Lower leg skin (tissue), 4 donors: ENCODE measurements at regions of chr7 and their contacts with region 1.

Region 1: GRCh38 chr7:1654738-1655475 is 15.2 kb upstream of the ELFN1 start:
- DNase-seq: no peak
- H3K4me3 ChIP-seq: no peak overlapping the region
- CTCF ChIP-seq: no peak
- POLR2A ChIP-seq: no peak

Region 2: DNA sequence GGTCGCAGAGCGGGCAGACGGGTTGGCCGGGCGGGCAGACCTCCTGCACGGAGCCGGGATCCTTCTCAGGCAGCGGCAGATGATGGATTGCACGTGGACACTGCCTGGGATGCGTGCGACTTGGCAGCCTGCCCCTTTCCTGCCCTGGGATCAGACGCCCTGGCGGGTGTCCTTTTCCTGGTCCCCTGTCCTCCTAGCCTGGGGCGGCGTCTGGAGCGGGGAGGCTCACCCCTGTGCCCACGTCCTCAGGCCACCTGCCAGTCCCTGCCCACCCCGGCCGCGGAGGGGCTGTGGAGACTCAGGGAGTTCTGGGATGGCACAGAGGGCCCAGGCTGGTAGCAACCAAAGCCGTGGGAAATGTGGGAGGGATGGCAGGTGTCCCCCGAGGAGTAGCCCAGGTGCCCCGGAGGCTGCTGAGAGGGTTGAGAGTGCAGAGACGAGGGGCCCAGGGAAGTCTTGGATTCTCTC is 67.7 kb before region 1 on chr7:
- intact Hi-C with region 1: loop called (anchors 2 kb)
- DNase-seq: no peak
- H3K4me3 ChIP-seq: no peak overlapping the region
- CTCF ChIP-seq: no peak
- POLR2A ChIP-seq: no peak